ENCODE measurements at regions of chr19 and their contacts with region 1.

Region 1: GRCh38 chr19:15332311-15332996 is at the start of gene BRD4:
- DNase-seq: peak; percentile 89
- ATAC-seq: peak; percentile 37
- H3K4me3 ChIP-seq: peak within 1 kb of the TSS; percentile 78 to 99 (median 85)
- H3K4me3 Mint-ChIP-seq: peak within 1 kb of the TSS; percentile 97
- H3K27ac ChIP-seq: peak within 1 kb of the TSS; percentile 92 to 96
- H3K27ac Mint-ChIP-seq: peak within 1 kb of the TSS; percentile 96
- H3K4me1 ChIP-seq: peaks cover 42 to 62% of the 10 kb centered on the region in 2 donors
- H3K4me1 Mint-ChIP-seq: peaks cover 52% of the 10 kb centered on the region
- H3K27me3 ChIP-seq: no peaks in the 10 kb centered on the region
- H3K27me3 Mint-ChIP-seq: no peaks in the 10 kb centered on the region
- CTCF ChIP-seq: no peak
- total RNA-seq, gene BRD4: 209 and 233 TPM in 2 replicates

Region 2: GRCh38 chr19:14366498-14366915 is 965.9 kb before region 1 on chr19:
- CTCF ChIA-PET with region 1: no interaction called
- POLR2A ChIA-PET with region 1: no interaction called
- intact Hi-C with region 1: no loop called
- DNase-seq: peak; percentile 91
- ATAC-seq: peak; percentile 47
- H3K4me3 ChIP-seq: no peak overlapping the region
- H3K4me3 Mint-ChIP-seq: peak overlapping the region; percentile 40
- H3K27ac ChIP-seq: peak overlapping the region; percentile 63 to 100
- H3K27ac Mint-ChIP-seq: peak overlapping the region; percentile 87
- H3K4me1 ChIP-seq: peaks cover 67 to 80% of the 10 kb centered on the region in 2 donors
- H3K4me1 Mint-ChIP-seq: peaks cover 61% of the 10 kb centered on the region
- H3K27me3 ChIP-seq: no peaks in the 10 kb centered on the region
- H3K27me3 Mint-ChIP-seq: no peaks in the 10 kb centered on the region
- CTCF ChIP-seq: no peak

Region 3: GRCh38 chr19:15125232-15126067 is 207.0 kb before region 1 on chr19:
- CTCF ChIA-PET with region 1: no interaction called
- POLR2A ChIA-PET with region 1: no interaction called
- intact Hi-C with region 1: loop called (anchors 5 kb)
- DNase-seq: peak; percentile 99
- ATAC-seq: peak; percentile 84
- H3K4me3 ChIP-seq: peak overlapping the region; percentile 60 to 87 (median 85)
- H3K4me3 Mint-ChIP-seq: peak overlapping the region; percentile 98
- H3K27ac ChIP-seq: peak overlapping the region; percentile 87 to 97
- H3K27ac Mint-ChIP-seq: peak overlapping the region; percentile 97
- H3K4me1 ChIP-seq: peaks cover 10 to 12% of the 10 kb centered on the region in 2 donors
- H3K4me1 Mint-ChIP-seq: peaks cover 19% of the 10 kb centered on the region
- H3K27me3 ChIP-seq: no peaks in the 10 kb centered on the region
- H3K27me3 Mint-ChIP-seq: peaks cover 9% of the 10 kb centered on the region
- CTCF ChIP-seq: no peak

Region 4: DNA sequence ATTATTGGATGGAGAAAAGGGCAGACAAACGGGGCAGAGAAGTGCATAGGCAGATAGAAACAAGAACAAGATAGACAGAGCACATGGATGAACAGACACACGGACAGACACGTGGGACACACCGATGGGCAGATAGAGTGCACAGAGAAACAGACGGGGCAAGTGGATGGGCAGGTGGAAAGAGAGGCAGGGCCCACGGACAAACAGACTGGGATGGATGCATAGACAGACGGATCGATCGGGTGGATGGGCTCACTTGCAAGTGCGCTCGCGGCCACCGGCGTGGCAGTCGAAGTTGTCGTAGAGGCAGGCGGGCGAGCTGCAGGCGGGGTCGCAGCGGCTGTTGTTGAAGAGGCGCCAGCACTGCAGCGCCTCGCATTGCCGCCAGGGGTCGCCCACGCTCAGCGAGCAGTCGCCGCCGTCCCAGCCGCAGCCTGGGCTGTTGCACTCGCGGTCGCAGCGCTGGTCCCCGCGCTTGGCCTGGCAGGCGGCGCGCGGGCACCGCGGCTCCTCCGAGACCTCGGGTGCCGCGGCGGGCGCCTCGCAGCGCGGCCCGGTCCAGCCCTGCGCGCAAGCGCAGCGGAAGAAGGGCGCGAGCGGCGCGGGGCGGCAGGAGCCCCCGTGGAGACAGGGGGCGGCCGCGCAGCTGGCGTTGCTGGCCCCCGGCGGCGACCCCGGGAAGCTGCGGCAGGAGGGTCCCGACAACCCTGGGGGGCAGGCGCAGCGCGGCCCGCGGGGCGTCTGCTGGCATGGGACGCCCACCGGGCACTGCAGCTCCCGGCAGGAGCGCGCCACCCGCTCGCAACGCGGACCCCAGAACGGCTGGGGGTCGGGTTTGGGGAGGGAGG is 155.0 kb before region 1 on chr19:
- CTCF ChIA-PET with region 1: interaction called, 5 read pairs
- POLR2A ChIA-PET with region 1: no interaction called
- intact Hi-C with region 1: loop called (anchors 5 kb)
- DNase-seq: peak; percentile 91
- ATAC-seq: peak; percentile 100
- H3K4me3 ChIP-seq: no peak overlapping the region
- H3K4me3 Mint-ChIP-seq: peak overlapping the region; percentile 59
- H3K27ac ChIP-seq: no peak overlapping the region
- H3K27ac Mint-ChIP-seq: peak overlapping the region; percentile 22
- H3K4me1 ChIP-seq: peaks cover 4 to 6% of the 10 kb centered on the region in 2 donors
- H3K4me1 Mint-ChIP-seq: peaks cover 7% of the 10 kb centered on the region
- H3K27me3 ChIP-seq: peaks cover 0 to 22% (median 4%) of the 10 kb centered on the region in 4 experiments
- H3K27me3 Mint-ChIP-seq: peaks cover 24% of the 10 kb centered on the region
- CTCF ChIP-seq: peak; percentile 90

Region 5: GRCh38 chr19:15264061-15264932 is 68.2 kb before region 1 on chr19:
- CTCF ChIA-PET with region 1: no interaction called
- POLR2A ChIA-PET with region 1: interaction called, 3 read pairs
- intact Hi-C with region 1: loop called (anchors 2 kb)
- DNase-seq: peak; percentile 82
- ATAC-seq: peak; percentile 67
- H3K4me3 ChIP-seq: no peak overlapping the region
- H3K4me3 Mint-ChIP-seq: no peak overlapping the region
- H3K27ac ChIP-seq: no peak overlapping the region
- H3K27ac Mint-ChIP-seq: no peak overlapping the region
- H3K4me1 ChIP-seq: no peaks in the 10 kb centered on the region
- H3K4me1 Mint-ChIP-seq: peaks cover 2% of the 10 kb centered on the region
- H3K27me3 ChIP-seq: no peaks in the 10 kb centered on the region
- H3K27me3 Mint-ChIP-seq: no peaks in the 10 kb centered on the region
- CTCF ChIP-seq: peak; percentile 90

Region 6: GRCh38 chr19:15318241-15318691 is 14.2 kb before region 1 on chr19:
- CTCF ChIA-PET with region 1: interaction called, 5 read pairs
- POLR2A ChIA-PET with region 1: interaction called, 7 read pairs
- intact Hi-C with region 1: loop called (anchors 1 kb)
- DNase-seq: peak; percentile 88
- ATAC-seq: peak; percentile 81
- H3K4me3 ChIP-seq: peak overlapping the region in 1 of 5 experiments; percentile 5
- H3K4me3 Mint-ChIP-seq: peak overlapping the region; percentile 72
- H3K27ac ChIP-seq: peak overlapping the region; percentile 79 to 86
- H3K27ac Mint-ChIP-seq: peak overlapping the region; percentile 86
- H3K4me1 ChIP-seq: peaks cover 85 to 97% of the 10 kb centered on the region in 2 donors
- H3K4me1 Mint-ChIP-seq: peaks cover 87% of the 10 kb centered on the region
- H3K27me3 ChIP-seq: no peaks in the 10 kb centered on the region
- H3K27me3 Mint-ChIP-seq: no peaks in the 10 kb centered on the region
- CTCF ChIP-seq: no peak

Region 7: GRCh38 chr19:15379083-15379995 is 46.9 kb after region 1 on chr19 and contains the start of gene AKAP8:
- CTCF ChIA-PET with region 1: interaction called, 17 read pairs
- POLR2A ChIA-PET with region 1: interaction called, 58 read pairs
- intact Hi-C with region 1: loop called (anchors 1 kb)
- DNase-seq: peak; percentile 99
- ATAC-seq: peak; percentile 91
- H3K4me3 ChIP-seq: peak within 1 kb of the TSS; percentile 87 to 99 (median 94)
- H3K4me3 Mint-ChIP-seq: peak within 1 kb of the TSS; percentile 97
- H3K27ac ChIP-seq: peak within 1 kb of the TSS; percentile 92 to 97
- H3K27ac Mint-ChIP-seq: peak within 1 kb of the TSS; percentile 100
- H3K4me1 ChIP-seq: peaks cover 26 to 27% of the 10 kb centered on the region in 2 donors
- H3K4me1 Mint-ChIP-seq: peaks cover 39% of the 10 kb centered on the region
- H3K27me3 ChIP-seq: no peaks in the 10 kb centered on the region
- H3K27me3 Mint-ChIP-seq: no peaks in the 10 kb centered on the region
- CTCF ChIP-seq: no peak
- total RNA-seq, gene AKAP8: 80.0 and 84.8 TPM in 2 replicates